CD8-positive, alpha-beta T cell (primary cell): ENCODE measurements at regions of chr15 and their contacts with region 1.

Region 1: DNA sequence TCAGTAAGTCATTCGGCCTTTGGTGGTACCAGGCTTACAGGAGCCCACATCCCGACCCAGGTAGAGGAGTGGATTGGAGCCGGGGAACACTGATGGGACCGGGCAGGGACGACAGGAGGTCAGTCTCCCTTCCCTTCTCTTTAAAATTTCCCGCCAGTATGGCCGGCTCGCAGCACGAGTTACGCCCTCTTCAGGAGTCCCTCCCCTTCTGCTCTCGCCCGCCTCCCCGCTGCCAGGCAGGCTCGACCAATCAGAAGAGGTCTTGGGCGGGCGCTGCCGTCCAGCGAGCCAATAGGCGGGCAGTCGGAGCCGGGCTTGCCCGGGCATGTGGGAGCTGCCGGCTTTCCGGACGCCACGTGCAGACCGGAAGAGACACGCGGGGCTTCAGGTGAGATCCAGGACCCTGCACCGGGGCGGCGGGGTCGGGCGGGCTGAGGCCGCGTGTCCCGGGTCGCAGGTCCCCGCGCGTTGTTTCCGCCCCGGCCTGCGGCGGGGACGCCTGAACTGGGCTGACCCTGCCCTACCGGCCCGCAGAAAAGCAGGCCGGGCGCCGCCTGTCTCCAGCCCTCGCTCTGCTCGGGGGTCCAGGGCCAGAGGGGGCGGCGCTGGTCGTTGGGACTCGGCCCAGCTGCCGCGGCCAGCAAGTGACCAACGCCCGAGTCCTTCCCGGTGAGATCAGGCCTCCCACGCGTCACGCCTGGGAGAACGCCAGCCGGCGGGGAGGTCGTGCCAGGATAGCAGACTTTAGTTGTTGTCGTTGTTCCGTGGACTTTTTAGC is at the start of gene AEN:
- DNase-seq: peak; percentile 90 to 97 (median 93)
- ATAC-seq: peak; percentile 81
- H3K4me3 ChIP-seq: peak within 1 kb of the TSS; percentile 64 to 85
- H3K4me3 Mint-ChIP-seq: peak within 1 kb of the TSS; percentile 84
- H3K27ac ChIP-seq: peak within 1 kb of the TSS; percentile 61 to 75
- H3K27ac Mint-ChIP-seq: peak within 1 kb of the TSS; percentile 93
- H3K4me1 ChIP-seq: peaks cover 42% of the 10 kb centered on the region
- H3K4me1 Mint-ChIP-seq: peaks cover 49% of the 10 kb centered on the region
- H3K27me3 ChIP-seq: no peaks in the 10 kb centered on the region
- H3K27me3 Mint-ChIP-seq: peaks cover 2% of the 10 kb centered on the region
- CTCF ChIP-seq: no peak
- total RNA-seq, gene AEN: 26.9 to 27.7 TPM

Region 2: DNA sequence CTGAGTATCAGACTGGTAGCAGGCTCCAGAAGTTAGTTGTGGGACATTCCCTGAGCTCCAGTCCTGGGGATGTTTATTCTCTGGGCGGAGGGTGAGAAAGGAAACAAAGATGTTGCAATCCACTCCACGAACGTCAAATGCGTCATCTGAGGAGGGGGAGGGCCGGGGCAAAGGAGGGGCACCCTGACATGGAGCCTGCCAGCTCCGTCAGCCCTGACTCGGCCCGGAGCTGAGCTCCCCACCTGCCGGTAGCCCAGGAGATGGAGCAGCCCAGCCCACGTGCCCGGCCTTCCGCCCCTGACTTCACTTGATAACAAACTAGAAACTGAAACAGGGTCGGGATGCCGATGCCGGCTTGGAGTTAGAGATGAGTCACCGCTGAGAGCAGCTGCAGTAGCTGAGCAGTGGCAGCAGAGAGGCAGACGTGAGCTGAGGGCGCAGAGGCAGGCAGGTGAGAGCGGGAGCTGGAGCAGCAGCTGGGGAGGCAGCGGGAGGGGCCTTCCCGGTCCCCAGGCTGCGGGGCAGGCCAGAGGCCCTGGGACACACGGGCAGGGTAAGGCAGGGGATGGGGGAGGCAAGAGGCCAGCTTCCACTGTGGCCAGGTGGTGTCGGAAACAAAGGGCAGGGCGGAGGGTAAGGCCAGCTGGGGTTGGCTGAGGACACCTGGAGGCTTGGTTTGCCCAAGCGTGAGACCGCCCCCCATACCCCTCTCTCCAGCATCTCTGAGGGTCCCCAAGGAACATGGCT is 17.6 kb after region 1 on chr15 and contains the start of gene ISG20:
- CTCF ChIA-PET with region 1: interaction called, 7 read pairs
- POLR2A ChIA-PET with region 1: interaction called, 3 read pairs
- intact Hi-C with region 1: loop called in 1 of 2 experiments (anchors 1 kb)
- DNase-seq: peak; percentile 88 to 100 (median 96)
- ATAC-seq: peak; percentile 80
- H3K4me3 ChIP-seq: peak within 1 kb of the TSS; percentile 67 to 76
- H3K4me3 Mint-ChIP-seq: peak within 1 kb of the TSS; percentile 88
- H3K27ac ChIP-seq: peak within 1 kb of the TSS; percentile 97
- H3K27ac Mint-ChIP-seq: peak within 1 kb of the TSS; percentile 97
- H3K4me1 ChIP-seq: peaks cover 88% of the 10 kb centered on the region
- H3K4me1 Mint-ChIP-seq: peaks cover 77% of the 10 kb centered on the region
- H3K27me3 ChIP-seq: no peaks in the 10 kb centered on the region
- H3K27me3 Mint-ChIP-seq: no peaks in the 10 kb centered on the region
- CTCF ChIP-seq: peak; percentile 63
- total RNA-seq, gene ISG20: 89.2 to 93.4 TPM

Region 3: GRCh38 chr15:88664151-88664778 is 43.1 kb after region 1 on chr15:
- CTCF ChIA-PET with region 1: interaction called, 127 read pairs
- POLR2A ChIA-PET with region 1: interaction called, 12 read pairs
- intact Hi-C with region 1: loop called (anchors 1 kb)
- DNase-seq: peak in 7 of 9 experiments; percentile 29 to 80 (median 66)
- ATAC-seq: peak; percentile 91
- H3K4me3 ChIP-seq: no peak overlapping the region
- H3K4me3 Mint-ChIP-seq: no peak overlapping the region
- H3K27ac ChIP-seq: no peak overlapping the region
- H3K27ac Mint-ChIP-seq: peak overlapping the region; percentile 15
- H3K4me1 ChIP-seq: peaks cover 35% of the 10 kb centered on the region
- H3K4me1 Mint-ChIP-seq: peaks cover 32% of the 10 kb centered on the region
- H3K27me3 ChIP-seq: no peaks in the 10 kb centered on the region
- H3K27me3 Mint-ChIP-seq: peaks cover 6% of the 10 kb centered on the region
- CTCF ChIP-seq: peak; percentile 63

Region 4: GRCh38 chr15:88878720-88879184 is 257.6 kb after region 1 on chr15:
- CTCF ChIA-PET with region 1: interaction called, 4 read pairs
- POLR2A ChIA-PET with region 1: no interaction called
- intact Hi-C with region 1: loop called in 1 of 2 experiments (anchors 5 kb)
- DNase-seq: peak in 6 of 9 experiments; percentile 6 to 52 (median 32)
- ATAC-seq: peak; percentile 61
- H3K4me3 ChIP-seq: no peak overlapping the region
- H3K4me3 Mint-ChIP-seq: no peak overlapping the region
- H3K27ac ChIP-seq: no peak overlapping the region
- H3K27ac Mint-ChIP-seq: no peak overlapping the region
- H3K4me1 ChIP-seq: no peaks in the 10 kb centered on the region
- H3K4me1 Mint-ChIP-seq: peaks cover 3% of the 10 kb centered on the region
- H3K27me3 ChIP-seq: no peaks in the 10 kb centered on the region
- H3K27me3 Mint-ChIP-seq: no peaks in the 10 kb centered on the region
- CTCF ChIP-seq: peak; percentile 35

Region 5: GRCh38 chr15:89087830-89088604 is 466.8 kb after region 1 on chr15 and contains the start of gene ABHD2:
- CTCF ChIA-PET with region 1: interaction called, 4 read pairs
- POLR2A ChIA-PET with region 1: interaction called, 3 read pairs
- intact Hi-C with region 1: loop called (anchors 1 to 5 kb)
- DNase-seq: peak; percentile 94 to 99 (median 98)
- ATAC-seq: peak; percentile 94
- H3K4me3 ChIP-seq: peak within 1 kb of the TSS; percentile 65 to 87
- H3K4me3 Mint-ChIP-seq: no peak within 1 kb of the TSS
- H3K27ac ChIP-seq: peak within 1 kb of the TSS; percentile 50 to 69
- H3K27ac Mint-ChIP-seq: peak within 1 kb of the TSS; percentile 70
- H3K4me1 ChIP-seq: peaks cover 43% of the 10 kb centered on the region
- H3K4me1 Mint-ChIP-seq: peaks cover 35% of the 10 kb centered on the region
- H3K27me3 ChIP-seq: no peaks in the 10 kb centered on the region
- H3K27me3 Mint-ChIP-seq: no peaks in the 10 kb centered on the region
- CTCF ChIP-seq: no peak
- total RNA-seq, gene ABHD2: 22.2 to 25.7 TPM

Region 6: DNA sequence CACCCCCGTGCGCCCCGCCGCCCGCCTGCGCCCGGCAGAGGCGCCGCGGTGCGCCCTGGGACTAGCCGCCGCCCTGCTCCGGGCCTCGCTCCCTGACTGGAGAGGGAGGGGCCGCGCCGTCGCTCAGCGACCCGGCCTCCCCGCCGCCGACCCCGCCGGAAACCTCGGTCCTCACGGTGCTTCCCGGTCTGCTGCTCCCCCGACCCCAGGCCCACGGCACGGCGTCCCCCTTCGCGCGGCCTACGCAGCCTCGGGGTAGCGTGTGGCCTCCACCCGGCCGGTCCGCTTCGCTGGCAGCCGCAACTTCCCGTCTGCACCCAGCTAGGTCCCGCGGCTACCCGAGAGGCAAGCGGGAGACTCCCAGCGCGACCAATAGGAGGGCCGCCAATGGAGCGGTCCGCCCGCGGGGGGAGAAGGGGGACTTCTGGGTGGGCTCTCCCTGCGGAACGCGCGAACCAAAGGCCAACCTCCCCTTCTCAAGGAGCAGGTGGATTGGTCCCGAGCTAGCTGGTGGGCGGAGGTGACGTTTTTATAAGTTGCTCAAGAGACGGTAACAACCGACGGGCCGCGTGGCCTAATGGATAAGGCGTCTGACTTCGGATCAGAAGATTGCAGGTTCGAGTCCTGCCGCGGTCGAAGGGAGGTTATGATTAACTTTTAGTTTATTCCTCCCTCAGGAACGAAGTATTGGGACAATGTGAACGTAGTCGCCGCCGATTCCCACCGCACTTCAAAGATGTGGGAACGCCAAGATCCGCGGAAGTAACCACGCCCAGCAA is 713.5 kb after region 1 on chr15 and contains the start of gene POLG:
- CTCF ChIA-PET with region 1: no interaction called
- POLR2A ChIA-PET with region 1: no interaction called
- intact Hi-C with region 1: loop called (anchors 5 to 10 kb)
- DNase-seq: peak; percentile 98 to 99 (median 99)
- ATAC-seq: peak; percentile 89
- H3K4me3 ChIP-seq: peak within 1 kb of the TSS; percentile 57 to 72
- H3K4me3 Mint-ChIP-seq: peak within 1 kb of the TSS; percentile 89
- H3K27ac ChIP-seq: peak within 1 kb of the TSS; percentile 68 to 76
- H3K27ac Mint-ChIP-seq: peak within 1 kb of the TSS; percentile 99
- H3K4me1 ChIP-seq: peaks cover 56% of the 10 kb centered on the region
- H3K4me1 Mint-ChIP-seq: peaks cover 46% of the 10 kb centered on the region
- H3K27me3 ChIP-seq: no peaks in the 10 kb centered on the region
- H3K27me3 Mint-ChIP-seq: no peaks in the 10 kb centered on the region
- CTCF ChIP-seq: no peak
- total RNA-seq, gene POLG: 147 to 158 TPM